ENCODE measurements at regions of chr10 and their contacts with region 1.

Region 1: GRCh38 chr10:95246579-95247051 is 44.2 kb downstream of the PDLIM1 start:
- DNase-seq: peak; percentile 65
- ATAC-seq: peak; percentile 59 to 72
- H3K4me3 ChIP-seq: no peak overlapping the region
- H3K27ac ChIP-seq: peak overlapping the region; percentile 25
- H3K4me1 ChIP-seq: peaks cover 40% of the 10 kb centered on the region
- H3K27me3 ChIP-seq: no peaks in the 10 kb centered on the region
- CTCF ChIP-seq: peak; percentile 85

Region 2: GRCh38 chr10:95363303-95363912 is 116.8 kb after region 1 on chr10:
- intact Hi-C with region 1: loop called (anchors 10 kb)
- DNase-seq: no peak
- ATAC-seq: peak; percentile 73 to 75
- H3K4me3 ChIP-seq: no peak overlapping the region
- H3K27ac ChIP-seq: no peak overlapping the region
- H3K4me1 ChIP-seq: peaks cover 31% of the 10 kb centered on the region
- H3K27me3 ChIP-seq: no peaks in the 10 kb centered on the region
- CTCF ChIP-seq: peak; percentile 88

Region 3: GRCh38 chr10:95430231-95430951 is 183.8 kb after region 1 on chr10:
- intact Hi-C with region 1: no loop called
- DNase-seq: no peak
- ATAC-seq: peak; percentile 90 to 91
- H3K4me3 ChIP-seq: no peak overlapping the region
- H3K27ac ChIP-seq: no peak overlapping the region
- H3K4me1 ChIP-seq: peaks cover 25% of the 10 kb centered on the region
- H3K27me3 ChIP-seq: no peaks in the 10 kb centered on the region
- CTCF ChIP-seq: peak; percentile 94